ENCODE measurements at regions of chr3 and their contacts with region 1.

Region 1: GRCh38 chr3:114383875-114384557 is 90.2 kb downstream of the TIGIT start:
- DNase-seq: peak; percentile 81
- ATAC-seq: peak; percentile 87
- H3K4me3 ChIP-seq: no peak overlapping the region
- H3K27ac ChIP-seq: peak overlapping the region; percentile 22; the same call in 1 of the 2 replicates
- H3K4me1 ChIP-seq: peaks cover 9% of the 10 kb centered on the region
- H3K27me3 ChIP-seq: no peaks in the 10 kb centered on the region
- CTCF ChIP-seq: peak; percentile 94
- POLR2A ChIP-seq: 0 out of 2 replicates have a peak, but pooled peaks have one; percentile 25
- RAD21 ChIP-seq: peak; percentile 96

Region 2: GRCh38 chr3:114405202-114405990 is 21.4 kb after region 1 on chr3:
- CTCF ChIA-PET with region 1: interaction called, 10 read pairs
- POLR2A ChIA-PET with region 1: no interaction called
- dilution Hi-C with region 1: no loop called
- in situ Hi-C with region 1: no loop called
- intact Hi-C with region 1: no loop called
- DNase-seq: no peak
- ATAC-seq: 0 out of 2 replicates have a peak, but pooled peaks have one; percentile 17
- H3K4me3 ChIP-seq: no peak overlapping the region
- H3K27ac ChIP-seq: no peak overlapping the region
- H3K4me1 ChIP-seq: peaks cover 4% of the 10 kb centered on the region
- H3K27me3 ChIP-seq: no peaks in the 10 kb centered on the region
- CTCF ChIP-seq: no peak
- POLR2A ChIP-seq: no peak
- RAD21 ChIP-seq: no peak

Region 3: DNA sequence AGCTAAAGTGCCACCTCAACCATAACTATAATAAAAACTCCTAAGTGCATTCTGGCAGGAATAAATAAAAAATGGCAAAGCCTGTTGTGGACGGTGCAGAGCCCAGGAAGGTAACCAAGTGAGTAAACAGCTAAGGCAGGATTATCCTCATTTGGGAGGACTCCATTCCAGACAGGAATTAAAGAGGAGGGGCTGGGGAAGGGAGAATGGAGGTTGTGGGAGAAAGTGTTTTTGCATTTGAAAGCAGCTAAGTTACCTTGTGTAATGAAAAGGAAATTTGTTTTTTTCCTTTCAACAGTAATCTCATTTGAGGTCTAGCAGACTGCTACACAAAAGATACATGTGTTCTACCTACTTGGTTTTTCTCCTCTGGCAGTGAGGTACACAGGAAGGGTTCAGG is 158.3 kb after region 1 on chr3:
- CTCF ChIA-PET with region 1: no interaction called
- POLR2A ChIA-PET with region 1: no interaction called
- dilution Hi-C with region 1: no loop called
- in situ Hi-C with region 1: no loop called
- intact Hi-C with region 1: no loop called
- DNase-seq: no peak
- ATAC-seq: no peak
- H3K4me3 ChIP-seq: no peak overlapping the region
- H3K27ac ChIP-seq: no peak overlapping the region
- H3K4me1 ChIP-seq: peaks cover 2% of the 10 kb centered on the region; the same call in 1 of the 2 replicates
- H3K27me3 ChIP-seq: no peaks in the 10 kb centered on the region
- CTCF ChIP-seq: no peak
- POLR2A ChIP-seq: no peak
- RAD21 ChIP-seq: no peak

Region 4: GRCh38 chr3:114608293-114608692 is 224.3 kb after region 1 on chr3:
- CTCF ChIA-PET with region 1: interaction called, 3 read pairs
- POLR2A ChIA-PET with region 1: interaction called, 3 read pairs
- dilution Hi-C with region 1: no loop called
- in situ Hi-C with region 1: no loop called
- intact Hi-C with region 1: loop called (anchors 5 kb)
- DNase-seq: peak; percentile 95
- ATAC-seq: peak; percentile 89
- H3K4me3 ChIP-seq: no peak overlapping the region
- H3K27ac ChIP-seq: peak overlapping the region; percentile 54; the same call in 1 of the 2 replicates
- H3K4me1 ChIP-seq: peaks cover 19% of the 10 kb centered on the region
- H3K27me3 ChIP-seq: no peaks in the 10 kb centered on the region
- CTCF ChIP-seq: no peak
- POLR2A ChIP-seq: no peak
- RAD21 ChIP-seq: 0 out of 2 replicates have a peak, but pooled peaks have one; percentile 5

Region 5: GRCh38 chr3:114827495-114827894 is 443.5 kb after region 1 on chr3:
- CTCF ChIA-PET with region 1: no interaction called
- POLR2A ChIA-PET with region 1: no interaction called
- dilution Hi-C with region 1: no loop called
- in situ Hi-C with region 1: no loop called
- intact Hi-C with region 1: loop called (anchors 2 kb)
- DNase-seq: peak; percentile 58
- ATAC-seq: peak; percentile 77
- H3K4me3 ChIP-seq: no peak overlapping the region
- H3K27ac ChIP-seq: no peak overlapping the region
- H3K4me1 ChIP-seq: no peaks in the 10 kb centered on the region
- H3K27me3 ChIP-seq: no peaks in the 10 kb centered on the region
- CTCF ChIP-seq: peak; percentile 61
- POLR2A ChIP-seq: no peak
- RAD21 ChIP-seq: peak; percentile 74

Region 6: DNA sequence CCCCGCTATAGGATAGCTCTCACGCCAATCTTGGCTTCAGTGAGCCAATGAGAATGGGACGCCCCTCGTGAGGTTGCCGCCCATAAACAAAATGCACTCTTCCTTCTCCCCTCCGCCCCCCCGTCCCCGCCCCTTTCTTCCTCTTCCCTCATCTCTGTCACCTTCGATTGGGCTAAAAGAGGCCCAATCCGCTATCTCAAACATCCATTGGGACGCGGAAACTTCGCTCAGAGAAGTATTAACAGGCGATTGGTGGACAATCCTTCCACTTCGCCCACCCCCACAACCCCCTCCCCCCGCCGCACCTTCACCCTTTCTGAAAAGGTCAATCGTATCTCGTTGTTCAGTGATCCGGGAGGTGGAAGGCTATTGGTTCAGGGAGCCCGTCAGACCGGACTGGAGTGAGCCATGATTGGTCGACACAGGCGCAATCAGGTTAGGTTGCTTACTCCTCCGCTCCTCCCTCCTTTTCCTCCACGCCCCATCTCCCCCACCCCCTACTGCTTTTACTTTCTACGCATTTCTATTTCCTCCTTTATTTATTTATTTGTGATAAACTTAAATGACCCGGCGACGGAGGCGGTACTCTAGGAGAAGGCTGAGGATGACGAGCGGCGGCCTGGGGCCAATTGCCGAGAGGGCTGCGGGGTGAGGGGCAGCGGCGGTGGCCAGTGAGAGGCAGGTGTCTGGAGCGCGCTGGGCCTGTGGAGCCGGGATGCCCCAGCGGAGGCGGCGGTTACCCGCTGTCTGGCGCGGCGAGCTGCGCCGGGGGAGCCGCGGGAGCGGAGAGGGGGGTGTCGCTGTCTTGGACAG is 763.5 kb after region 1 on chr3:
- CTCF ChIA-PET with region 1: no interaction called
- POLR2A ChIA-PET with region 1: no interaction called
- dilution Hi-C with region 1: no loop called
- in situ Hi-C with region 1: no loop called
- intact Hi-C with region 1: loop called (anchors 5 kb)
- DNase-seq: peak; percentile 100
- ATAC-seq: peak; percentile 84
- H3K4me3 ChIP-seq: peak overlapping the region; percentile 82
- H3K27ac ChIP-seq: peak overlapping the region; percentile 81
- H3K4me1 ChIP-seq: no peaks in the 10 kb centered on the region
- H3K27me3 ChIP-seq: no peaks in the 10 kb centered on the region
- CTCF ChIP-seq: no peak
- POLR2A ChIP-seq: peak; percentile 89
- RAD21 ChIP-seq: no peak; the same call in 1 of the 2 replicates

Measured in IMR-90 (cell line).